ENCODE measurements at regions of chr17 and their contacts with region 1.

Region 1: GRCh38 chr17:39863918-39864746 is at the start of gene IKZF3:
- DNase-seq: peak; percentile 78
- ATAC-seq: peak; percentile 58
- H3K4me3 Mint-ChIP-seq: peak within 1 kb of the TSS; percentile 98
- H3K27ac Mint-ChIP-seq: peak within 1 kb of the TSS; percentile 99
- H3K4me1 Mint-ChIP-seq: peaks cover 71% of the 10 kb centered on the region
- H3K27me3 Mint-ChIP-seq: no peaks in the 10 kb centered on the region
- CTCF ChIP-seq: no peak
- total RNA-seq, gene IKZF3: 208 and 220 TPM in 2 replicates

Region 2: GRCh38 chr17:39687811-39688518 is 176.2 kb before region 1 on chr17 and contains the start of gene PGAP3:
- CTCF ChIA-PET with region 1: no interaction called
- POLR2A ChIA-PET with region 1: interaction called, 6 read pairs
- intact Hi-C with region 1: loop called (anchors 5 kb)
- DNase-seq: peak; percentile 78
- ATAC-seq: peak; percentile 95
- H3K4me3 Mint-ChIP-seq: peak within 1 kb of the TSS; percentile 99
- H3K27ac Mint-ChIP-seq: peak within 1 kb of the TSS; percentile 97
- H3K4me1 Mint-ChIP-seq: peaks cover 18% of the 10 kb centered on the region
- H3K27me3 Mint-ChIP-seq: no peaks in the 10 kb centered on the region
- CTCF ChIP-seq: no peak
- total RNA-seq, gene PGAP3: 19.0 and 24.0 TPM in 2 replicates

Region 3: GRCh38 chr17:39744075-39744835 is 119.9 kb before region 1 on chr17:
- CTCF ChIA-PET with region 1: no interaction called
- POLR2A ChIA-PET with region 1: interaction called, 16 read pairs
- intact Hi-C with region 1: no loop called
- DNase-seq: no peak
- ATAC-seq: no peak
- H3K4me3 Mint-ChIP-seq: no peak overlapping the region
- H3K27ac Mint-ChIP-seq: no peak overlapping the region
- H3K4me1 Mint-ChIP-seq: peaks cover 14% of the 10 kb centered on the region
- H3K27me3 Mint-ChIP-seq: peaks cover 9% of the 10 kb centered on the region
- CTCF ChIP-seq: no peak

Region 4: DNA sequence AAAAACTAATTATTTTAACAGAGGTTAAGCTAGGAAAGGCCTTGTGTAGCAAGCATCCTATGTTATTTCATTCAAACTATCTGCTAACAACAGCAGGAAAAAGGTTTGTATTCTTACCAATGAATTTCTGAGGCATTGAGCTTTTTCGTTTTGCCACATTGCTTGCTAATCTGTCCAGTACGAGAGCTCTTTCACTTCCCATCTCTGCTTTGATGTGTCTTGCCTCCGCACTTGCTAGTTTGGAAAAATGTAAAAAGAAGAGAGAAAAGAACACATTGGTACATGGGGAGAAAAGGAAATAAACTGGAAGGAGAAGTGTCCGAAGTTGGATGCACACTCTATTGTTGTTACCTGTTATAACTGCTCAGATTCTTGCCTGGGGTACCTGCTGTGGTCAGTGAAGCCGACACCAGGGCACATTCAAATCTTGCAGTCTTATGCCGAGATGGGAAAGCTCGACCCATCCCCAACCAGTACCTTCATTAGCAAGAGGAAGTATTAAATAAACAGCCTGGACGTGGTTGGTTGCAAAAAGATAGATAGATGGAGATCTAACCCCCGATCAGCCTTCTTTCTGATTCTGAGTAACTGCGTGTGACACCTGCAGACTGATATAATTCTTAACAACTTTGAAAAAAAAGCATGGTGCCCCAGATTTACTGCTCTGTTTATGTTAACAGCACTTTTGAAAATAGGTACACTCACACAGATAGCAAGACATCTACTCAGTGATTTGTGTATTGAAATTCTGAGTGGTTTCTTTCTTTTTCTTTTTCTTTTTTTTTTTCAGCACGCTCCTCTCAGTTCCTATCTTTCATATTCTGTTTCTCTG is 86.4 kb before region 1 on chr17:
- CTCF ChIA-PET with region 1: interaction called, 3 read pairs
- POLR2A ChIA-PET with region 1: interaction called, 50 read pairs
- intact Hi-C with region 1: no loop called
- DNase-seq: no peak
- ATAC-seq: peak; percentile 44
- H3K4me3 Mint-ChIP-seq: peak overlapping the region; percentile 88
- H3K27ac Mint-ChIP-seq: peak overlapping the region; percentile 96
- H3K4me1 Mint-ChIP-seq: peaks cover 93% of the 10 kb centered on the region
- H3K27me3 Mint-ChIP-seq: no peaks in the 10 kb centered on the region
- CTCF ChIP-seq: no peak

Region 5: DNA sequence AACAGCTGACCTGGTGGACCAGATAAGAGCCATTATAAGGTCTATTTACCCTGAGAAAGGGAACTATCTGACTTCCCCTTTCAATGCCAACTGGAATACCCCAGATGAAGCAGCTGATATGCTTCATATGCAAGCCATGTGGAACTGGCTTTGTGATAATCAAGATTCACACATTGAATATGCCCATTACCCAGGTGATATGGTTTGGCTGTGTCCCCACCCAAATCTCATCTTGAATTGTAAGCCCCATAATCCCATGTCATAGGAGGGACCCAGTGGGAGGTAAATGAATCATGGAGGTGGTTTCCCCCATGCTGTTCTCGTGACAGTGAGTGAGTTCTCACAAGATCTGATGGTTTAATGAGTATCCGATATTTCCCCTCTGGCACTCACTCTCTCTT is 42.1 kb before region 1 on chr17:
- CTCF ChIA-PET with region 1: interaction called, 5 read pairs
- POLR2A ChIA-PET with region 1: interaction called, 21 read pairs
- intact Hi-C with region 1: loop called (anchors 1 kb)
- DNase-seq: no peak
- ATAC-seq: peak; percentile 70
- H3K4me3 Mint-ChIP-seq: peak overlapping the region; percentile 45
- H3K27ac Mint-ChIP-seq: peak overlapping the region; percentile 95
- H3K4me1 Mint-ChIP-seq: peaks cover 65% of the 10 kb centered on the region
- H3K27me3 Mint-ChIP-seq: no peaks in the 10 kb centered on the region
- CTCF ChIP-seq: no peak

Region 6: GRCh38 chr17:39943702-39944392 is 79.7 kb after region 1 on chr17:
- CTCF ChIA-PET with region 1: no interaction called
- POLR2A ChIA-PET with region 1: no interaction called
- intact Hi-C with region 1: no loop called
- DNase-seq: no peak
- ATAC-seq: no peak
- H3K4me3 Mint-ChIP-seq: no peak overlapping the region
- H3K27ac Mint-ChIP-seq: no peak overlapping the region
- H3K4me1 Mint-ChIP-seq: peaks cover 26% of the 10 kb centered on the region
- H3K27me3 Mint-ChIP-seq: no peaks in the 10 kb centered on the region
- CTCF ChIP-seq: no peak

Region 7: GRCh38 chr17:40323391-40324381 is 459.6 kb after region 1 on chr17:
- CTCF ChIA-PET with region 1: no interaction called
- POLR2A ChIA-PET with region 1: no interaction called
- intact Hi-C with region 1: loop called (anchors 1 kb)
- DNase-seq: peak; percentile 72
- ATAC-seq: peak; percentile 40
- H3K4me3 Mint-ChIP-seq: peak overlapping the region; percentile 93
- H3K27ac Mint-ChIP-seq: peak overlapping the region; percentile 98
- H3K4me1 Mint-ChIP-seq: peaks cover 98% of the 10 kb centered on the region
- H3K27me3 Mint-ChIP-seq: no peaks in the 10 kb centered on the region
- CTCF ChIP-seq: no peak

Measured in activated B cell treated with CpG ODN at 0.5 μM for 24 hours (primary cell).